ENCODE measurements at regions of chr10 and their contacts with region 1.

Region 1: GRCh38 chr10:23413629-23414089 is 25.2 kb upstream of the OTUD1 start:
- DNase-seq: no peak
- H3K4me3 Mint-ChIP-seq: no peak overlapping the region
- H3K27ac Mint-ChIP-seq: no peak overlapping the region
- H3K4me1 Mint-ChIP-seq: peaks cover 24% of the 10 kb centered on the region
- H3K27me3 Mint-ChIP-seq: no peaks in the 10 kb centered on the region

Region 2: DNA sequence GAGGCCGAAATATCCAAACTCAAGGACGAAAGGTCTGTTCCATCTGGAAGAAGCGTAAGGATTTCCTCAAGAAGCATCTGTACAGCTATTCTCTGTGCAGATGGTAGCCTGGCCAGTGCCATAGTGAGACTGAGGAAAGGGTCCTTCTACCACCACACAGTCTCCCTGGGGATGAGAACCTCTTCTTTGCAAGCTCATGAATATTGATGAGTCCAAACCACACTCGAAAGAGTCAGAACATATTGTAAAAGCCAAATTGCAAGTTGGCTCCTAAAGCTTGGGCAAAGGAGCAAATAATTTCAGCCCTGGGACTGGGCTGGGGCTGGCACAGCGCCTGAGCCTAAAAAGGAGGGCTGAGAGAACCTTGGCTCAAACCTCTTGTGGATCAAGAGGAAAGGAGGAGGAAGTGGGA is 633.2 kb before region 1 on chr10:
- CTCF ChIA-PET with region 1: no interaction called
- POLR2A ChIA-PET with region 1: no interaction called
- intact Hi-C with region 1: no loop called
- DNase-seq: no peak
- H3K4me3 Mint-ChIP-seq: no peak overlapping the region
- H3K27ac Mint-ChIP-seq: no peak overlapping the region
- H3K4me1 Mint-ChIP-seq: no peaks in the 10 kb centered on the region
- H3K27me3 Mint-ChIP-seq: no peaks in the 10 kb centered on the region

Region 3: GRCh38 chr10:23338178-23338828 is 75.4 kb before region 1 on chr10:
- CTCF ChIA-PET with region 1: no interaction called
- POLR2A ChIA-PET with region 1: no interaction called
- intact Hi-C with region 1: loop called (anchors 1 kb)
- DNase-seq: no peak
- H3K4me3 Mint-ChIP-seq: no peak overlapping the region
- H3K27ac Mint-ChIP-seq: no peak overlapping the region
- H3K4me1 Mint-ChIP-seq: peaks cover 73% of the 10 kb centered on the region
- H3K27me3 Mint-ChIP-seq: no peaks in the 10 kb centered on the region

Region 4: GRCh38 chr10:23362879-23363792 is 50.5 kb before region 1 on chr10:
- CTCF ChIA-PET with region 1: interaction called, 3 read pairs
- POLR2A ChIA-PET with region 1: no interaction called
- intact Hi-C with region 1: loop called (anchors 1 kb)
- DNase-seq: peak; percentile 68
- H3K4me3 Mint-ChIP-seq: peak overlapping the region; percentile 63
- H3K27ac Mint-ChIP-seq: peak overlapping the region; percentile 89
- H3K4me1 Mint-ChIP-seq: peaks cover 61% of the 10 kb centered on the region
- H3K27me3 Mint-ChIP-seq: peaks cover 3% of the 10 kb centered on the region

Measured in activated CD4-positive, alpha-beta memory T cell treated with anti-CD3 and anti-CD28 coated beads for 36 hours (primary cell).